ENCODE measurements at regions of chr17 and their contacts with region 1.

Region 1: GRCh38 chr17:74493381-74493833 is 27.0 kb downstream of the CD300A start:
- DNase-seq: peak; percentile 39 to 73 (median 63)
- ATAC-seq: peak; percentile 90
- H3K4me3 ChIP-seq: no peak overlapping the region
- H3K4me3 Mint-ChIP-seq: no peak overlapping the region
- H3K27ac ChIP-seq: no peak overlapping the region
- H3K27ac Mint-ChIP-seq: no peak overlapping the region
- H3K4me1 ChIP-seq: peaks cover 0 to 10% of the 10 kb centered on the region in 2 donors
- H3K4me1 Mint-ChIP-seq: peaks cover 0 to 15% (median 4%) of the 10 kb centered on the region in 7 donors
- H3K27me3 ChIP-seq: no peaks in the 10 kb centered on the region
- H3K27me3 Mint-ChIP-seq: peaks cover 0 to 11% (median 0%) of the 10 kb centered on the region in 5 donors

Region 2: GRCh38 chr17:74203439-74204240 is 289.8 kb before region 1 on chr17 and contains the start of gene RPL38:
- CTCF ChIA-PET with region 1: no interaction called
- POLR2A ChIA-PET with region 1: no interaction called
- intact Hi-C with region 1: loop called in 1 of 2 experiments (anchors 2 kb)
- DNase-seq: peak; percentile 83 to 95 (median 94)
- ATAC-seq: peak; percentile 98
- H3K4me3 ChIP-seq: peak within 1 kb of the TSS; percentile 89
- H3K4me3 Mint-ChIP-seq: peak within 1 kb of the TSS; percentile 85 to 100 (median 98)
- H3K27ac ChIP-seq: peak within 1 kb of the TSS; percentile 86
- H3K27ac Mint-ChIP-seq: peak within 1 kb of the TSS; percentile 89 to 98 (median 96)
- H3K4me1 ChIP-seq: peaks cover 16 to 20% of the 10 kb centered on the region in 2 donors
- H3K4me1 Mint-ChIP-seq: peaks cover 24 to 49% (median 34%) of the 10 kb centered on the region in 7 donors
- H3K27me3 ChIP-seq: peaks cover 0 to 5% of the 10 kb centered on the region in 2 donors
- H3K27me3 Mint-ChIP-seq: peaks cover 8 to 16% (median 11%) of the 10 kb centered on the region in 5 donors
- total RNA-seq, gene RPL38: 1,097 to 2,553 (median 2,002) TPM

Region 3: DNA sequence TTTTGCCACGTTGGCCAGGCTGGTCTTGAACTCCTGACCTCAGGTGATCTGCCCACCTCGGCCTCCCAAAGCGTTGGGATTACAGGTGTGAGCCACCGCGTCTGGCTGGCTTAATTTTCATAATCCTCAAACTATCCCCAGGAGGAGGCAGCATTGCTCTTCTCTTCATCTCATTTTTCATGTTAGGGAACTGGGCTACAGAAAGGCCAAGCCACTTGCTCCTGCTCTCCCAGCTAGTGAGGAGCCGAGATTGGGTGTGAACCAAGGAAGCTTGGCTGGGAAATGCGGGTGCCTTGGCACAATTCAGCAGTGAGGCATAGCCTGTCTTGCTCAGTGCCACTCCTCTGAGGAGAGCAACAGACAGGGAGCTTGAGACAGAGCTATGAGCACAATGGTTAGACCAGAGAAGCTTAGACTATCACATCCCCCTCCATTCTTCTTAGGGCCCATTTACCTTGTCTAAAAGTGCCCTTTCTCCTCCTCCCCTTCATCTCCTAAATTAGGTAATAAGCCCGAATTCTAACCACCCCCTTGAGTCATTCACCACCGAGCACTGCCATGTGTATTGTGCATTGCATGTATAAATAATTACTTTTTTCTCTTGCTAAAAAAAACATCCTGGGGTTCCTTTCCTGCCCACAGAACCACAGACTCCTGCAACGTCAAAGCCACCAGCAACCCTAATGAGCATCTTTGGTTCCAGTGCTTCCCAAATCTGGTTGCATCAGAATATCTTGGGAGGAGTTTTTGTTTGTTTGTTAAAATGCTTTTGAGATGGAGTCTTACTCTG is 187.3 kb before region 1 on chr17:
- CTCF ChIA-PET with region 1: no interaction called
- POLR2A ChIA-PET with region 1: no interaction called
- intact Hi-C with region 1: loop called (anchors 1 to 10 kb)
- DNase-seq: no peak
- ATAC-seq: no peak
- H3K4me3 ChIP-seq: no peak overlapping the region
- H3K4me3 Mint-ChIP-seq: no peak overlapping the region
- H3K27ac ChIP-seq: no peak overlapping the region
- H3K27ac Mint-ChIP-seq: no peak overlapping the region
- H3K4me1 ChIP-seq: peaks cover 0 to 4% of the 10 kb centered on the region in 2 donors
- H3K4me1 Mint-ChIP-seq: peaks cover 0 to 19% (median 6%) of the 10 kb centered on the region in 7 donors
- H3K27me3 ChIP-seq: no peaks in the 10 kb centered on the region
- H3K27me3 Mint-ChIP-seq: peaks cover 0 to 8% (median 0%) of the 10 kb centered on the region in 5 donors

Region 4: GRCh38 chr17:74379495-74380085 is 113.8 kb before region 1 on chr17:
- CTCF ChIA-PET with region 1: interaction called, 19 read pairs
- POLR2A ChIA-PET with region 1: no interaction called
- intact Hi-C with region 1: loop called in 1 of 2 experiments (anchors 1 kb)
- DNase-seq: peak; percentile 70 to 94 (median 85)
- ATAC-seq: peak; percentile 95
- H3K4me3 ChIP-seq: peak overlapping the region; percentile 19
- H3K4me3 Mint-ChIP-seq: peak overlapping the region in 1 of 10 donors; percentile 7
- H3K27ac ChIP-seq: no peak overlapping the region
- H3K27ac Mint-ChIP-seq: peak overlapping the region in 1 of 9 donors; percentile 41
- H3K4me1 ChIP-seq: peaks cover 8 to 10% of the 10 kb centered on the region in 2 donors
- H3K4me1 Mint-ChIP-seq: peaks cover 0 to 7% (median 0%) of the 10 kb centered on the region in 7 donors
- H3K27me3 ChIP-seq: no peaks in the 10 kb centered on the region
- H3K27me3 Mint-ChIP-seq: peaks cover 0 to 18% (median 0%) of the 10 kb centered on the region in 5 donors

Region 5: DNA sequence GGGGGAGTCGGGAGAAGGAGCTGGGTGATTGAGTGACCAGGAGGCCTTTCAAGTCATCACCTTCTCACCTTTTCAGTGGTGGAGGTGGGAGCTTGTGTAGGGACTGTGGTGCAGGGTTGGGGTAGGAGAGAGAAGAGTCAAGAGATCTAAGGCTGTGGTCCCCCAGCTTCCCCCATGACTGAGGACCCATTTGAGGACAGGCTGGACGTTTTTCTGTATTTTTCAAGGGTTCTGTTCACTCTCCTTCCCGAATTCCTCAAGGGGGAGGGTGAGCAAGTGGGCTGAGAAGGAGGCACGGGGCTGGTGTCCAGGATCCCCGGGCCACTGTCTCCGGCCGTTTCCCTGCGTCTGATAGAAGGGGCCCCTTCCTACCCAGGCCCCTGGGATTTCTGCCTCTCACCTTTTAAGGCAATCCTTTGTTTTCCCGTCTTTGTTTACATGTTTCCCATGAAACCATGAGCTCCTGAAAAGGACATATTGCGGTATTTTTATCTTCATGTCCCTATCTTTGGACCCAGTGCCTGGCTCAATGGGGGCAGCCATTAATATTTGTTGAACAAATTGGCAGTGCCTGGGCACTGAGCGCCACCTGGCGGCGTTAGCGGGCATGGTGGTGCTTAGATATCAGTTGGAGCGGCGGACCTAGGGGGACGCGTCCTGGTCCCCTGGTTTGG is 36.1 kb before region 1 on chr17:
- CTCF ChIA-PET with region 1: interaction called, 4 read pairs
- POLR2A ChIA-PET with region 1: no interaction called
- intact Hi-C with region 1: loop called (anchors 1 kb)
- DNase-seq: peak; percentile 22 to 72 (median 50)
- ATAC-seq: peak; percentile 68
- H3K4me3 ChIP-seq: no peak overlapping the region
- H3K4me3 Mint-ChIP-seq: peak overlapping the region in 3 of 10 donors; percentile 17 to 30 (median 25)
- H3K27ac ChIP-seq: no peak overlapping the region
- H3K27ac Mint-ChIP-seq: peak overlapping the region in 3 of 9 donors; percentile 18 to 65 (median 30)
- H3K4me1 ChIP-seq: peaks cover 5 to 52% of the 10 kb centered on the region in 2 donors
- H3K4me1 Mint-ChIP-seq: peaks cover 0 to 43% (median 12%) of the 10 kb centered on the region in 7 donors
- H3K27me3 ChIP-seq: no peaks in the 10 kb centered on the region
- H3K27me3 Mint-ChIP-seq: peaks cover 0 to 19% (median 0%) of the 10 kb centered on the region in 5 donors

Measured in naive thymus-derived CD4-positive, alpha-beta T cell (primary cell).